Ovary (tissue), 10 donors: ENCODE measurements at regions of chr15 and their contacts with region 1.

Region 1: GRCh38 chr15:66774001-66774814 is 72.2 kb downstream of the SMAD6 start:
- DNase-seq: peak; percentile 82 to 91 (median 89)
- H3K4me3 ChIP-seq: no peak overlapping the region
- H3K27ac ChIP-seq: peak overlapping the region; percentile 61 to 75
- H3K4me1 ChIP-seq: peaks cover 18% of the 10 kb centered on the region
- H3K27me3 ChIP-seq: no peaks in the 10 kb centered on the region
- CTCF ChIP-seq: peak; percentile 85 to 98 (median 98)
- EP300 ChIP-seq: no peak
- POLR2A ChIP-seq: peak; percentile 36

Region 2: GRCh38 chr15:66611257-66612053 is 162.8 kb before region 1 on chr15:
- intact Hi-C with region 1: loop called in 2 of 4 experiments (anchors 5 kb)
- DNase-seq: no peak
- H3K4me3 ChIP-seq: no peak overlapping the region
- H3K27ac ChIP-seq: no peak overlapping the region
- H3K4me1 ChIP-seq: no peaks in the 10 kb centered on the region
- H3K27me3 ChIP-seq: no peaks in the 10 kb centered on the region
- CTCF ChIP-seq: no peak
- EP300 ChIP-seq: no peak
- POLR2A ChIP-seq: no peak

Region 3: GRCh38 chr15:66619151-66619903 is 154.9 kb before region 1 on chr15:
- intact Hi-C with region 1: loop called (anchors 5 kb)
- DNase-seq: peak; percentile 72 to 86 (median 83)
- H3K4me3 ChIP-seq: no peak overlapping the region
- H3K27ac ChIP-seq: no peak overlapping the region
- H3K4me1 ChIP-seq: peaks cover 11% of the 10 kb centered on the region
- H3K27me3 ChIP-seq: no peaks in the 10 kb centered on the region
- CTCF ChIP-seq: peak; percentile 83 to 90 (median 85)
- EP300 ChIP-seq: no peak
- POLR2A ChIP-seq: no peak

Region 4: DNA sequence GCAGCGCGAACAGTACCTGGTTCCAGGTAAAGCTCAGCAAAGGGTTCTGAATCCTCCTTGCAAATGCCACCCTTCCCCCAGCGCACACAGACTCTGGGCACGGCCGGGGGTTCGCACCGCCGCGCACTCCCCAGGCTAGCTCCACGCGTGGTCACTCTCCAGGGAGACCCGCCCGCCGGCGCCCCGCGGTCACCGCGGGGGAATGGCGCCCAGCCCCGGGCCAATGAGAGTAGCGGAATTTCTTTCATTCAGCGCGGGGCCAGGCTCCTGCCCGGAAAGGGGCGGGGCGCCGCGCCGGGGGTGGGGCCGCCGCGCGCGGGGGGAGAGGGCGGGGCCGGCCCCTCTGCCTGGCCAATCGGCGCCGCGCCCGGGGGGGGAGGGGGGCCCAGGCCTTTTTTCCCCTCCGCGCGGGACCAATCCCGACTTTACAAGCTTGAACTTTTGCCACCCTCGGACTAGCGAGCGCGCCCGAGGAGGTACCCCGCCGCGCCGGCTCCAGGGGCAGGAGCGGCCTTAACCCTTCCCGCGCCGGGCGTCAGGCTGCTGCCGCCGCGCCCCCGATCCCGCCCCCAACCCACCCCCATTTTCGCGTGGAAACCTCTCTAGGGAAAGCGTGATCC is 73.3 kb before region 1 on chr15:
- intact Hi-C with region 1: loop called in 3 of 4 experiments (anchors 1 to 5 kb)
- DNase-seq: peak; percentile 96 to 98 (median 97)
- H3K4me3 ChIP-seq: peak overlapping the region; percentile 54
- H3K27ac ChIP-seq: peak overlapping the region; percentile 65 to 76
- H3K4me1 ChIP-seq: peaks cover 11% of the 10 kb centered on the region
- H3K27me3 ChIP-seq: no peaks in the 10 kb centered on the region
- CTCF ChIP-seq: no peak
- EP300 ChIP-seq: no peak
- POLR2A ChIP-seq: no peak

Region 5: GRCh38 chr15:66707310-66708082 is 66.7 kb before region 1 on chr15:
- intact Hi-C with region 1: loop called in 3 of 4 experiments (anchors 1 to 5 kb)
- DNase-seq: peak; percentile 51 to 72 (median 57)
- H3K4me3 ChIP-seq: peak overlapping the region; percentile 15
- H3K27ac ChIP-seq: peak overlapping the region in 1 of 2 donors; percentile 44
- H3K4me1 ChIP-seq: peaks cover 25% of the 10 kb centered on the region
- H3K27me3 ChIP-seq: no peaks in the 10 kb centered on the region
- CTCF ChIP-seq: peak in 1 of 3 donors; percentile 11
- EP300 ChIP-seq: no peak
- POLR2A ChIP-seq: no peak

Region 6: DNA sequence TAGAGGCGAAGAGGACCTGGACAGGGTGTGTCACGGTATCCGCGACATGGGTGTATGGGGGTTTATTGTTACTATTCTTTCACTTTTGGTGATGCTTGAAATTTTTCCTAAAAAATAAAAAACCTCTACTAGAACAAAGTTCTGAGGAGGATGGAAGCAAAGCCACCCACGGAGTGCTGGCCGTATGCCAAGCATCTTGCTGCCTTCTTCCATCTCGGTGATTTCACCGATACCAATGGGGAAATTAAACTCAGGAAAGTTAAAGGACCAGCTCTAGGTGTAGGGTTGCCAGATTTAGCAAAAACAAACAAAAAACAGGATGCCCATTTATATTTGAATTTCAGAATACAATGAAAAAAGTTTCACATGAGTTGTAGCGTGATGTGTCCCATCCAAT is 38.3 kb before region 1 on chr15:
- intact Hi-C with region 1: loop called in 1 of 4 experiments (anchors 5 kb)
- DNase-seq: peak in 2 of 5 donors; percentile 46 to 69
- H3K4me3 ChIP-seq: no peak overlapping the region
- H3K27ac ChIP-seq: no peak overlapping the region
- H3K4me1 ChIP-seq: peaks cover 23% of the 10 kb centered on the region
- H3K27me3 ChIP-seq: no peaks in the 10 kb centered on the region
- CTCF ChIP-seq: no peak
- EP300 ChIP-seq: no peak
- POLR2A ChIP-seq: no peak

Region 7: GRCh38 chr15:66838671-66839239 is 64.5 kb after region 1 on chr15:
- intact Hi-C with region 1: no loop called
- DNase-seq: no peak
- H3K4me3 ChIP-seq: no peak overlapping the region
- H3K27ac ChIP-seq: no peak overlapping the region
- H3K4me1 ChIP-seq: peaks cover 10% of the 10 kb centered on the region
- H3K27me3 ChIP-seq: no peaks in the 10 kb centered on the region
- CTCF ChIP-seq: peak in 2 of 3 donors; percentile 26 to 44
- EP300 ChIP-seq: no peak
- POLR2A ChIP-seq: no peak

Region 8: DNA sequence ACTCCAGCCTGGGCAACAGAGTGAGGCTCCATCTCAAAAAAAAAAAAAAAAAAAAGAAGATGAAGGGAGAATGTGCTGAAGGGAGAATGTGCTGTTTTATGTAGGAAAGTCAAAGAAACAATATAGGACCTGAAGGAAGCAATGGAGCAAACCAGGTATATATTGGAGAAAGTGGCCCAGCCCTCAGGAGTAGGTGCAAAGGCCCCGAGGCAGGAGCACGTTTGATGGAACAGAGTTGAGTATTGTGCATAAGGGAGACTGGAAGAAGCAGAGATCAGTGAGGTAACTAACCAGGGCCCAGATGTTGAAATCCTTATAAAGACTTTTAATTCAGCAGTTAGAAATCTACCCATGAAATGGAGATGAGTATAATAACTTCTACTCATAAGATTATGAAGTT is 847.9 kb after region 1 on chr15:
- intact Hi-C with region 1: no loop called
- DNase-seq: no peak
- H3K4me3 ChIP-seq: no peak overlapping the region
- H3K27ac ChIP-seq: no peak overlapping the region
- H3K4me1 ChIP-seq: no peaks in the 10 kb centered on the region
- H3K27me3 ChIP-seq: no peaks in the 10 kb centered on the region
- CTCF ChIP-seq: no peak
- EP300 ChIP-seq: no peak
- POLR2A ChIP-seq: no peak